ENCODE measurements at regions of chr19 and their contacts with region 1.

Region 1: GRCh38 chr19:17579661-17580244 is 24.3 kb downstream of the COLGALT1 start:
- DNase-seq: peak in 3 of 14 experiments; percentile 16 to 57 (median 33)
- ATAC-seq: peak; percentile 37
- H3K4me3 ChIP-seq: no peak overlapping the region
- H3K4me3 Mint-ChIP-seq: no peak overlapping the region
- H3K27ac ChIP-seq: no peak overlapping the region
- H3K27ac Mint-ChIP-seq: no peak overlapping the region
- H3K4me1 ChIP-seq: no peaks in the 10 kb centered on the region
- H3K4me1 Mint-ChIP-seq: no peaks in the 10 kb centered on the region
- H3K27me3 ChIP-seq: no peaks in the 10 kb centered on the region
- H3K27me3 Mint-ChIP-seq: no peaks in the 10 kb centered on the region
- CTCF ChIP-seq: no peak

Region 2: GRCh38 chr19:17448131-17448967 is 131.4 kb before region 1 on chr19 and contains the start of gene TMEM221:
- CTCF ChIA-PET with region 1: no interaction called
- POLR2A ChIA-PET with region 1: no interaction called
- intact Hi-C with region 1: loop called (anchors 1 to 5 kb)
- DNase-seq: peak in 13 of 14 experiments; percentile 26 to 82 (median 55)
- ATAC-seq: peak; percentile 88
- H3K4me3 ChIP-seq: peak within 1 kb of the TSS; percentile 31
- H3K4me3 Mint-ChIP-seq: peak within 1 kb of the TSS; percentile 1
- H3K27ac ChIP-seq: no peak within 1 kb of the TSS
- H3K27ac Mint-ChIP-seq: no peak within 1 kb of the TSS
- H3K4me1 ChIP-seq: peaks cover 17% of the 10 kb centered on the region
- H3K4me1 Mint-ChIP-seq: peaks cover 10% of the 10 kb centered on the region
- H3K27me3 ChIP-seq: peaks cover 0 to 6% of the 10 kb centered on the region in 2 experiments
- H3K27me3 Mint-ChIP-seq: peaks cover 37% of the 10 kb centered on the region
- CTCF ChIP-seq: peak; percentile 56
- total RNA-seq, gene TMEM221: not detected

Region 3: DNA sequence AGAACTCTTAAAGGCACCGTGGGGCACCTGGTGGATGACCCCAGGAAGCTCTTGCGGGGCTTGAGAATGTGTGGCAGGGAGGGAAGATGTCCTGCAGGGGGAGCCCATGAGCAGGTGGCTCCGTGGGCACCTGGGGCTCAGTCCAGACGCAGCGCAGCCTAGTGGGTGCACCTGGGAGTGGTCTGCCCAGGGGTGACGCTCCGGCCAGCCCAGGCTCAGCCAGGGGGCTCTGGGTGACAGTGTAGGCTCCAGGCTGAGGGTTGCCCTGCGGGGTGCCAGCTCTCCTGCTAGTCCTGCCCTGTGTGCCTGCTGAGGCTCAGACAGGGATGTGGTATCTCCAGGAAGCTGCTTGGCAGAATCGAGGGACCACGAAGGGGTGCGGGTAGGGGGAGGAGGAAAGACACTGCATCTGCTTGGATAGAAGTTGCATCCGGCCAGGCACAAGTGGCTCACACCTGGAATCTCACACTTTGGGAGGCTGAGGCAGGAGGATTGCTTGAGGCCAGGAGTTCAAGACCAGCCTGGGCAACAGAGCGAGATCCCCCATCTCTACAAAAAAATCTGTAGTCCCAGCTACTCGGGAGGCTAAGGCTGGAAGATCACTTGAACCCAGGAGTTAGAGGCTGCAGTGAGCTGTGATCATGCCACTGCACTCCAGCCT is 83.3 kb before region 1 on chr19:
- CTCF ChIA-PET with region 1: no interaction called
- POLR2A ChIA-PET with region 1: no interaction called
- intact Hi-C with region 1: loop called in 1 of 2 experiments (anchors 2 kb)
- DNase-seq: peak; percentile 68 to 91 (median 76)
- ATAC-seq: peak; percentile 99
- H3K4me3 ChIP-seq: no peak overlapping the region
- H3K4me3 Mint-ChIP-seq: no peak overlapping the region
- H3K27ac ChIP-seq: no peak overlapping the region
- H3K27ac Mint-ChIP-seq: no peak overlapping the region
- H3K4me1 ChIP-seq: peaks cover 25% of the 10 kb centered on the region
- H3K4me1 Mint-ChIP-seq: peaks cover 17% of the 10 kb centered on the region
- H3K27me3 ChIP-seq: no peaks in the 10 kb centered on the region
- H3K27me3 Mint-ChIP-seq: no peaks in the 10 kb centered on the region
- CTCF ChIP-seq: peak; percentile 96